ENCODE measurements at regions of chr11 and their contacts with region 1.

Region 1: GRCh38 chr11:62787005-62787759 is at the start of gene TMEM179B:
- DNase-seq: peak; percentile 99
- H3K4me3 Mint-ChIP-seq: peak within 1 kb of the TSS; percentile 92
- H3K27ac Mint-ChIP-seq: peak within 1 kb of the TSS; percentile 93
- H3K4me1 Mint-ChIP-seq: peaks cover 47% of the 10 kb centered on the region
- H3K27me3 Mint-ChIP-seq: no peaks in the 10 kb centered on the region
- total RNA-seq, gene TMEM179B: 13.9 to 15.2 TPM

Region 2: DNA sequence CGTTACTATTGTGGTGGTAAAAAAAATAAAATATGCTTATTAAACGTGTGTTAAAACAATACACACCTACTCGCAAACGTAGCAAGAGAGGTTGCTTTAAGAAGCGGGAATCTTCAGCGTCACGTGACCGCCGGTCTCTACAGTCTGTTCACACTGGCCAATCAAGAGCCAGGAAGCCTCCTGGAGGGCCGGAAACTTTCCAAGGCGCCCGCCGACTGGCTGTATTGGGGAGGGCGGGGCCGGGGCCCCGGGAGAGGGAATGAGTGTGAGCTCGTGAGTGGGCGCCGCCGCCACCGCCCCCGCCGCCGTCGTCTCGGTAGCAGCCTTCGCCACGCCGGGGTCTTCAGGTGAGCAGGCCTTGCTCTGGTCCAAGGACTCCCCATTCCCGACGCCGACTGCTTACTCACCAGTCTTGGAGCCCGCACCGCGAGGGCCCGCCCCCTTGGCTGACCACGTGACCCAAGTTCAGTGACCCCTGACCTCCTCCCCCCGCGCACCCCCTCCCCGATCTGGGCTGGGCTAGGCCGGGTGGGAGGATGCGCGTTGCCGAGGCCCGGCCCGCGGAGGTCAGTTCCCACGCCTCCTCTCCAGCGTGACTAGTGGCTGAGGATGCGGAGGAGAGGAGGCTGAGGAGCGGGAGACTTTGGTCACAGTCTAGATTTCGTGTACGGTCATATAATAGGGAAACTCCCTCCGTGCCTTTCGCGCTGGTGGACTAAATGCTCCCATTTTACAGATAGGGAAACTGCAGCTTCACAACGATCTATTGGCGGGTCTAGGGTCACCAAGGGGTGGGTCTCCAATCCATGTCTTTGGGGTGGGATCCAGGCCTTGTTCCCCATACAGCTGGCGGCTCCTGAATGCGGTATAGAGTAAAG is 15.8 kb before region 1 on chr11 and contains the start of gene TAF6L:
- CTCF ChIA-PET with region 1: interaction called, 53 read pairs
- intact Hi-C with region 1: loop called (anchors 1 kb)
- DNase-seq: peak; percentile 95
- H3K4me3 Mint-ChIP-seq: peak within 1 kb of the TSS; percentile 80
- H3K27ac Mint-ChIP-seq: peak within 1 kb of the TSS; percentile 91
- H3K4me1 Mint-ChIP-seq: peaks cover 25% of the 10 kb centered on the region
- H3K27me3 Mint-ChIP-seq: no peaks in the 10 kb centered on the region
- total RNA-seq, gene TAF6L: 8.9 to 10.5 TPM

Region 3: DNA sequence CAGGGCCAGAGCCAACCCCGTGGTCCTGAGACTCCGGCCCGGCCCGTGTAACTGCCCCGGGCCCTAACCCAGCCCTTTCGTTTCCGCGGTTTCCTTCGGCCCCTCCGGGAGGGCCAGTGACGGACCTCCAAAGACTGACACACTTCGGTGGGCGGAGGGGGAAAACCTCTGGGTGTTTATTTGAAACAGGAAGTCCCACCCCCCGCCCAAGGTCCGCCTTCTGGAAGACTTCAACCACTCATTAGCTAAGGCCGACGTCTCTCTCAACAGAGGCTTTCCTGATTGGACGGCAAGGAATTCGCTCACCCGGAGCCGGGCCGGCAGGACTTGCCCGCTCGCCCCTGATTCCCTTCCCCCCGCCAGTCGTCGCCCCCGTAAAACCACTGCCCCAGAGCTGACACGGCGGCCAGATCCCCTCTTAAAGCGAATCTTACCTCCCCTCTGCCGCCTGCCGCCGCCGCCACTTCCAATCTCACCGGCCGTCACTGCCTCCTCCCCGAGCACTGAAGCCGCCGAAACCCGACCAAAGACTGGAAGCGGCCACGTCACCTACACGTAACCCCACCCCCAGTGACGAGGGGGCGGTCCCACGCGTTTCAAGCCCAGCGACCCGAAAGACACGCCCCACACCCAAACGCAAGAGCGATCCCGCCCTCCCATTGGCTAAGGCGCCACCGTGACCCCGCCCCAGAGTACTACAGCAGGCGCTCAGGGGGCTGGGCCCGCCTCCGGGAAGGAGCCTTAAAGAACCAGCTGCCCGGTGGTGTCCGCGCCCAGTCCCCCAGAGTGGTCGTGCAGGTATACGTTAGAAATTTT is 44.5 kb after region 1 on chr11 and contains the start of gene STX5:
- CTCF ChIA-PET with region 1: interaction called, 15 read pairs
- intact Hi-C with region 1: loop called (anchors 1 kb)
- DNase-seq: peak; percentile 100
- H3K4me3 Mint-ChIP-seq: peak within 1 kb of the TSS; percentile 99
- H3K27ac Mint-ChIP-seq: peak within 1 kb of the TSS; percentile 100
- H3K4me1 Mint-ChIP-seq: peaks cover 47% of the 10 kb centered on the region
- H3K27me3 Mint-ChIP-seq: no peaks in the 10 kb centered on the region
- total RNA-seq, gene STX5: 22.7 to 23.0 TPM

Region 4: GRCh38 chr11:62860835-62861563 is 73.8 kb after region 1 on chr11:
- CTCF ChIA-PET with region 1: interaction called, 28 read pairs
- intact Hi-C with region 1: loop called (anchors 1 kb)
- DNase-seq: no peak
- H3K4me3 Mint-ChIP-seq: no peak overlapping the region
- H3K27ac Mint-ChIP-seq: no peak overlapping the region
- H3K4me1 Mint-ChIP-seq: peaks cover 46% of the 10 kb centered on the region
- H3K27me3 Mint-ChIP-seq: no peaks in the 10 kb centered on the region

Region 5: GRCh38 chr11:62974848-62975522 is 187.8 kb after region 1 on chr11:
- CTCF ChIA-PET with region 1: no interaction called
- intact Hi-C with region 1: no loop called
- DNase-seq: peak; percentile 24
- H3K4me3 Mint-ChIP-seq: no peak overlapping the region
- H3K27ac Mint-ChIP-seq: no peak overlapping the region
- H3K4me1 Mint-ChIP-seq: no peaks in the 10 kb centered on the region
- H3K27me3 Mint-ChIP-seq: peaks cover 8% of the 10 kb centered on the region

Measured in activated naive CD4-positive, alpha-beta T cell treated with anti-CD3 and anti-CD28 coated beads for 36 hours (primary cell).